ENCODE measurements at regions of chr3 and their contacts with region 1.

Region 1: GRCh38 chr3:122564155-122564912 is at the starts of genes DTX3L and PARP9:
- DNase-seq: peak; percentile 75 to 89
- ATAC-seq: peak; percentile 91 to 97 (median 93)
- H3K4me3 ChIP-seq: peak within 1 kb of the TSS; percentile 77
- H3K4me3 Mint-ChIP-seq: peak within 1 kb of the TSS; percentile 93
- H3K27ac ChIP-seq: peak within 1 kb of the TSS; percentile 89
- H3K27ac Mint-ChIP-seq: peak within 1 kb of the TSS; percentile 86 to 97
- H3K4me1 ChIP-seq: peaks cover 34% of the 10 kb centered on the region
- H3K4me1 Mint-ChIP-seq: peaks cover 77% of the 10 kb centered on the region in 2 donors
- H3K27me3 ChIP-seq: no peaks in the 10 kb centered on the region
- H3K27me3 Mint-ChIP-seq: no peaks in the 10 kb centered on the region
- CTCF ChIP-seq: no peak
- total RNA-seq, gene DTX3L: 40.8 to 61.0 (median 51.8) TPM
- total RNA-seq, gene PARP9: 23.8 to 41.1 (median 38.5) TPM

Region 2: GRCh38 chr3:122514123-122515019 is 50.0 kb before region 1 on chr3 and contains the start of gene KPNA1:
- intact Hi-C with region 1: loop called (anchors 1 kb)
- DNase-seq: peak; percentile 86 to 95
- ATAC-seq: peak; percentile 83 to 95 (median 87)
- H3K4me3 ChIP-seq: peak within 1 kb of the TSS; percentile 70
- H3K4me3 Mint-ChIP-seq: peak within 1 kb of the TSS; percentile 91
- H3K27ac ChIP-seq: peak within 1 kb of the TSS; percentile 97
- H3K27ac Mint-ChIP-seq: peak within 1 kb of the TSS; percentile 87 to 90
- H3K4me1 ChIP-seq: peaks cover 14% of the 10 kb centered on the region
- H3K4me1 Mint-ChIP-seq: peaks cover 45 to 49% of the 10 kb centered on the region in 2 donors
- H3K27me3 ChIP-seq: no peaks in the 10 kb centered on the region
- H3K27me3 Mint-ChIP-seq: peaks cover 0 to 7% of the 10 kb centered on the region in 2 donors
- CTCF ChIP-seq: no peak
- total RNA-seq, gene KPNA1: 62.3 to 67.1 (median 63.1) TPM

Region 3: DNA sequence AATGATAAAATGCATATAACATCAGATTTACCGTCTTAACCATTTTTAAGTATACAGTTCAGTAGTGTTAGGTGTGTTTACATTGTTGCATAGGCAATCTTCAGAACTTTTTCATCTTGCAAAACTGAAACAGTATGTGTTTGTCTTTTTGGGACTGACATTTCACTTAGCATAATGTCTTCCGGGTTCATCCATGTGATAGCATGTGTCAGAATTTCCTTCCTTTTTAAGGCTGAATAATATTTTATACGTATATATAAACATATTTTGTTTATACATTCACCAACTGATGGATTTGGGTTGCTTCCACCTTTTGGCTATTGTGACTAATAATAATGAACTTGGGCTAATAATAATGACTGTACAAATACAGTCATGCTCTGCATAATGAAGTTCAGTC is 16.1 kb after region 1 on chr3:
- intact Hi-C with region 1: loop called (anchors 2 kb)
- DNase-seq: no peak
- ATAC-seq: no peak
- H3K4me3 ChIP-seq: no peak overlapping the region
- H3K4me3 Mint-ChIP-seq: no peak overlapping the region
- H3K27ac ChIP-seq: no peak overlapping the region
- H3K27ac Mint-ChIP-seq: peak overlapping the region; percentile 95 to 98
- H3K4me1 ChIP-seq: peaks cover 12% of the 10 kb centered on the region
- H3K4me1 Mint-ChIP-seq: peaks cover 49 to 58% of the 10 kb centered on the region in 2 donors
- H3K27me3 ChIP-seq: no peaks in the 10 kb centered on the region
- H3K27me3 Mint-ChIP-seq: no peaks in the 10 kb centered on the region
- CTCF ChIP-seq: no peak

Region 4: DNA sequence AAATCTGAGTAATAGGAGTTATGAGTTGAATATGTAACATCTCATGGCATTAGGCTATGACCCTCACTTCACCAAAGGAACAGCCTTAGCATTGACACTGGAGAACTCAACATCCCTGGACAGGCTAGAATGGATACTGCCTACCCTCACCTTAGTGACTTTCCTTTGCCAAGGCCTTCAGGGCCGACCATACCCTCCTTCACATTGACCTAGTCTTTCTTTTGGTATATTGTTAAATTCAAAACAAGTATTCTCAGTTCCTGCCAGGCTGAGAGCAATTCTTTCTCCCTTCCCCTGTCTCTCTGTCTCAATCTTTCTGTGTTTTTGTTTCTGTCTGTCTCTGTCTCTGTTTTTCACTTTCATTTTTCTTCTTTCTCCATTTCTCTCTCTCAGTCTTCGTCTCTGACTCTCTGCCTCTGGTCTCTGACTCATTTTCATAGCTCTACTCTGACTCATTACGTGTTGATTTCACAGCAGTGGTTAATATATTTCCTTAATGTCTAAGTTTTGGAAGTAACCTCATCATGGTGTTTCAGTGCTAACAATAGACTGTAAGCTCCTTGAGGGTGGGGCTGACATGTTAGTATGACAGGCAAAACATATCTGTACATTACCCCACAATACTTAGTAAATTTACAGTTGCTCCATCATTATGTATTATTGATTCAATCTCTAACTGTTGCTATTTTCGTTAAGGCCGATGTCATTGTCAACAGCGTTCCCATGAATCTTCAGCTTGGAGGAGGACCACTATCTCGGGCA is 45.6 kb after region 1 on chr3:
- intact Hi-C with region 1: loop called (anchors 5 kb)
- DNase-seq: peak in 1 of 2 donors; percentile 9
- ATAC-seq: peak; percentile 81 to 93 (median 88)
- H3K4me3 ChIP-seq: no peak overlapping the region
- H3K4me3 Mint-ChIP-seq: no peak overlapping the region
- H3K27ac ChIP-seq: peak overlapping the region; percentile 66
- H3K27ac Mint-ChIP-seq: peak overlapping the region; percentile 72 to 90
- H3K4me1 ChIP-seq: peaks cover 2% of the 10 kb centered on the region
- H3K4me1 Mint-ChIP-seq: peaks cover 13 to 22% of the 10 kb centered on the region in 2 donors
- H3K27me3 ChIP-seq: no peaks in the 10 kb centered on the region
- H3K27me3 Mint-ChIP-seq: no peaks in the 10 kb centered on the region
- CTCF ChIP-seq: no peak

Region 5: DNA sequence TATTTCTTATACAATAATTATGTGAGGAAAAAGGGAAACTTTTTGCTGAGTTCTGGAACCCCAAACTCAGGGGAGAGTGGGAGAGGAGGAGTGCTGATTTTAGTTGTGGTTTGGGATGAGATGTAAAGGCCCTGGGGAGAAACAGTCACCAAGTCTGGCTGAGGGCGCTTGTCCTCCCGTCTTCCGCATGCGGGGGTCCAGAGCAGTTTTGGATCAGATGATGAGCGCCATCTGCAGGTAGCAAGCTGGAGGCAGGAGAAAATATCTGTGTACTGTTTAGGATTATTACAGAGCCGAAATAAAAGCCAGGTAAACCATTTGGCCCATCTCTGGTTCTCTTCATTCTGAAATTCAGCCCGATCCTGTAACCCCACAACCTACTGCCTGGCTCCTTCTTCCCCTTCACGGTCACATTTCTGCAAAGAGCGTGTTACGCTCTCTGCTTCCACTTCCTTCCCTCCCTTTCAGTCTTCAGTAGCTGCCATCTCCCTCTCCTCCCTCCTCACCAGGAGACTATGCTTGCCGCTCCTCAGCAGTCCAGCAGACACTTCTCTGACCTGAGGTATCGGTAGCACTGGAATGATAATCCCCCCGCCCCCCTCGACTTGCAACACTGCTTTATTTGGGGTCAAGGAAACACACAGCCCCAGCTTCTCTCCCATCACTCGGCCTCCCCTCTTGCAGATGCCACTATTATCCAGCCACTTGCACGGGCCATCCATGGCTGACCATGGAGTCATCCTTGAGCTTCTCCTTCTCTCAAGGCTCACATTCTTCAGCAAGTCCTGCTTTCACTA is 114.9 kb after region 1 on chr3:
- intact Hi-C with region 1: loop called (anchors 1 kb)
- DNase-seq: peak; percentile 75 to 94
- ATAC-seq: peak; percentile 65 to 75 (median 65)
- H3K4me3 ChIP-seq: peak overlapping the region; percentile 98
- H3K4me3 Mint-ChIP-seq: peak overlapping the region; percentile 90
- H3K27ac ChIP-seq: peak overlapping the region; percentile 96
- H3K27ac Mint-ChIP-seq: peak overlapping the region; percentile 84 to 99
- H3K4me1 ChIP-seq: peaks cover 40% of the 10 kb centered on the region
- H3K4me1 Mint-ChIP-seq: peaks cover 50 to 52% of the 10 kb centered on the region in 2 donors
- H3K27me3 ChIP-seq: no peaks in the 10 kb centered on the region
- H3K27me3 Mint-ChIP-seq: no peaks in the 10 kb centered on the region
- CTCF ChIP-seq: peak; percentile 82

Region 6: DNA sequence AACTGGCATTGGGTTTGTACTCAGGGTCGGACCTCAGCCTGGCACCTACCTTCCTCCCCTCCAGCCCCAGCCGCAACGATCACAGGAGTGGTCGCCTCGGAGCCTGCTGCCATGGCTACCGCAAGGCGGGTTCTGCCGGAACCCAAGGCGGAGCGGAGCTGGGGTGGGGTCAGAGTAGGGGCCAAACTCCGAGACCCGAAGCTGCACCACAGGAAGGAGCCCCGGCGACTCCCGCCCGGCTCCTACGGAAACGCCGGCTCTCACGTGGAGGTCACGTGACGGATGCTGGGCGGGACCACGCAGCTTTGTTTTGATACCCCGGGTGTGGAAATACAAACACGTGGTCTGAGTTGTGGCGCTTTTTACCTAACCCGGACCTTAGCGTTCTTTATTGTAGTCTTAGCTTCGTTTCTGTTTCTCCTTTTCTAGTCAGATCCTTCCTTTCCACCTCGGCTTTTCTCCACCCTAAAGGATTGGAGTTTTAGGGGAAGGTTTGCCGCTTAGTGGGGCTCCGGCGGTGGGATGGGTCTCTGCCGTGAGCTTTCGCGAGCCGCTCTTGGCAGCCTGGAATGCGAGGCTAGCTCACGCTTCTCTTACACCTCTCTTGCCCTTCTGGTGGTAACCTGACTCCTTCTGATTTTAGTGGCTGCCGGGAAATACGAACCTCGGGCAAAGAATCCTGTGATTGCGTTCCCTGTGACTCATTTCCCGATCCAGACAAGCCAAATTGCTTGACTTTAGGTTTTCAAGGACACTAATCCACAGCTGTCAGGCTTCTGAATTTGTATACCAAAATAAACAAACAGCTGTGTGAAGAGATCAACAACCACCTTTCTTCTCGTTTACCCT is 229.5 kb after region 1 on chr3 and contains the start of gene HSPBAP1:
- intact Hi-C with region 1: loop called (anchors 5 kb)
- DNase-seq: peak; percentile 92 to 95
- ATAC-seq: peak; percentile 67 to 83 (median 78)
- H3K4me3 ChIP-seq: peak within 1 kb of the TSS; percentile 77
- H3K4me3 Mint-ChIP-seq: peak within 1 kb of the TSS; percentile 94
- H3K27ac ChIP-seq: peak within 1 kb of the TSS; percentile 96
- H3K27ac Mint-ChIP-seq: no peak within 1 kb of the TSS
- H3K4me1 ChIP-seq: peaks cover 21% of the 10 kb centered on the region
- H3K4me1 Mint-ChIP-seq: peaks cover 20 to 25% of the 10 kb centered on the region in 2 donors
- H3K27me3 ChIP-seq: no peaks in the 10 kb centered on the region
- H3K27me3 Mint-ChIP-seq: no peaks in the 10 kb centered on the region
- CTCF ChIP-seq: no peak
- total RNA-seq, gene HSPBAP1: 19.7 to 24.7 (median 23.4) TPM

Region 7: DNA sequence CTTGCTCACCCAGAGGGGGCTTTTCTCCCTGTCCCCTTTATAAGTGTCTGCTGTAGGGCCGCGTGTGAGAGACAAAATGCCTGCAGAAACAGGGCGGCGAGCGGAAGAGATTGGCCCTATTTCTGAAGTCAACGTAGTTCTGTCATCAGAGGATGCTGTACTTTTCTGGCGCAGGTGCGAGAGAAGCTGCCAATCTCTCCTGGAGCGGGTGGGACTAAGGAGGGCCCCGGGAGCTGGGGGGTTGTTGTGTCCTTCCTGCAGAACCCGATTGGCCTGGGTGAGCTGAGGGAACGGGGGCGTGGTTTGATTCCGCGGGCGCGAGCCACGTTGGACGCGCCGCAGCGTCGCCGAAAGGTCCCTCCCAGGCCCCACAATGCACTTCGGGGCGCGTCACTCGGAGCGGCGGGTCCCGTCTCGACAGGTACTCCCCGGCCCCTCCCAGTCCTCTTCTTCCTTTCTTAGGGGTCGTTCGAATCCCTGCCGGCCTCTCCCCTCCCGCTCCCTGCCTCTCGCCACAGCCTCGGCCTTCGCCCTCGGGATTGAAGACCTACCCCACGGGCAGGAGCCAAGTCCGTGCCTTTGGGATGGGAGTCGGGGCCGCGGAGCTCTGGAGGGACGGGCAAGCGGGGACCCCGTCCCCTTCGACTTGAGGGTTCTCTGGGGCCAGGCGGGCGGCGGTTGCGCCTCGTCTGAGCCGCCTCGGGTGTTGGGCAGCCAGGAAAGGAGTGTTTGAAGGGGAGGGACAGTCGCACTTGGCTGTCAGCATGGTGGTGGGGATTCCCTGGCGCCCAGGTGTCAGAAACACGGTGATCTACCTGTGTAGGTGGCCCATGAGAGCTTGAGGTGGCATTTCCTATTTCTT is 637.5 kb after region 1 on chr3 and contains the start of gene SEC22A:
- intact Hi-C with region 1: loop called (anchors 5 kb)
- DNase-seq: peak; percentile 91 to 98
- ATAC-seq: peak; percentile 93 to 98 (median 93)
- H3K4me3 ChIP-seq: peak within 1 kb of the TSS; percentile 87
- H3K4me3 Mint-ChIP-seq: peak within 1 kb of the TSS; percentile 95
- H3K27ac ChIP-seq: peak within 1 kb of the TSS; percentile 95
- H3K27ac Mint-ChIP-seq: peak within 1 kb of the TSS; percentile 96 to 98
- H3K4me1 ChIP-seq: peaks cover 15% of the 10 kb centered on the region
- H3K4me1 Mint-ChIP-seq: peaks cover 22 to 26% of the 10 kb centered on the region in 2 donors
- H3K27me3 ChIP-seq: no peaks in the 10 kb centered on the region
- H3K27me3 Mint-ChIP-seq: peaks cover 0 to 3% of the 10 kb centered on the region in 2 donors
- CTCF ChIP-seq: no peak
- total RNA-seq, gene SEC22A: 16.4 to 21.2 (median 17.0) TPM

Measured in natural killer cell (primary cell).